ENCODE measurements at regions of chr9 and their contacts with region 1.

Region 1: DNA sequence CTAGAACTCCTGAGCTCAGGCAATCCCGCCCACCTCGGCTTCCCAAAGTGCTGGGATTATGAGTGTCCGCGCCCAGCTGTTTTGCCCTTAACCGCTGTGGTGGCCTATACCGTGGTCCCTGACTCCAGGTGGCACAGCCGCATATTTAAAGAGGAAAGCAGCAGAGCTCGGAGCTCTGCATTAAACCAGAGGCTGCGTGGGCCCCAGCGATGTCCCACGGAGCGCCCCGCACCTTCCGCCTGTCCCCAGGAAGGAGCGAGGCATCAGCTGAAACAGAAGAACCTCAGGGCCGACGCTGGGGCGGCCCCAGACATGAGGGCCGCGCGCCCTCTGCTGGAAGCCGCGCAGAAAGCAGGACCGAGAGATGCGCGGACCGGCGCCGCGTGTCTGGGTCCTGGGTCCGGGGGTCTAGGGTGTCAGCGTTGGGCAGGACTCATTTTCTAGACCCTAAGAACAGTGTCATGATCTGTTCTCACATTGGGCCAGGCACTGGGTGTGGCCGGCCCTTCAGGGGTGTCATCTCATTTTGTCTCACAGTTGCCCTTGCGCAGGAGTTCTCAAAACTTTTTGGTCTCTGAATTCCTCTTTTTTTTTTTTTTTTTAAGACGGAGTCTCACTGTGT is 37.7 kb downstream of the LAMC3 start:
- H3K4me3 ChIP-seq: no peak overlapping the region
- H3K27ac ChIP-seq: no peak overlapping the region
- H3K4me1 ChIP-seq: no peaks in the 10 kb centered on the region
- CTCF ChIP-seq: peak; percentile 90

Region 2: GRCh38 chr9:130707225-130707976 is 339.3 kb before region 1 on chr9:
- CTCF ChIA-PET with region 1: interaction called, 14 read pairs
- POLR2A ChIA-PET with region 1: interaction called, 3 read pairs
- H3K4me3 ChIP-seq: no peak overlapping the region
- H3K27ac ChIP-seq: no peak overlapping the region
- H3K4me1 ChIP-seq: no peaks in the 10 kb centered on the region
- CTCF ChIP-seq: peak; percentile 79

Region 3: GRCh38 chr9:130899051-130899748 is 147.5 kb before region 1 on chr9:
- CTCF ChIA-PET with region 1: interaction called, 11 read pairs
- POLR2A ChIA-PET with region 1: no interaction called
- H3K4me3 ChIP-seq: no peak overlapping the region
- H3K27ac ChIP-seq: no peak overlapping the region
- H3K4me1 ChIP-seq: no peaks in the 10 kb centered on the region
- CTCF ChIP-seq: no peak

Region 4: DNA sequence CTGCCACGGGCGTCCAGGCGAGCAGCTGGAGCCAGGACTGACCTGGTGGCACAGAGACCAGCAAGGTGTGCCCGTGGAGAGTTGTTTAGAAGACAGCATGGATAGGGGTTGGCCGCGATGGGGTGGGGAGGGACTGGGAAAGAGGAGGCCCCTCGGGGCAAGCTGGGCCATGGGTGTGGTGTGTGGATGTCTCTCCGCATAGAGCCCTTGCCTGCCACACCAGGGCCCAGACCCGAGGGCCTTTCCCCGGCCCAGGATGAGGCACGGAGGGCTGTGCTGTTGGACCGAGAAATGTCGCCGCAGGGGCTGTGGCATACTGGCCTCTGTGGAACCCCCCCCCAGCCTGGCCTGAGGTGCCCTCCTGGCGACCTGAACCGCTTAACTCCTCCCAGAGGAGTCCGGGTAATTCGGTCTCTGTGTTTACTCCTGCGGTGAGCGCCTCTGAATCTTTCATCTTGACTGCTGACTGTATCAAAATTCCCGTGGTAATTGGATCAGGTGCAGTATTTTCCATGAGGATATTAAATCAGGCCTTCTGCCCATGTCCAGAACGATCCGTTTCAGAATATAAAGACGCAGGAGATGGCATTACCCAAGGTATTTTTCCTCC is 60.2 kb before region 1 on chr9:
- CTCF ChIA-PET with region 1: interaction called, 11 read pairs
- POLR2A ChIA-PET with region 1: no interaction called
- H3K4me3 ChIP-seq: no peak overlapping the region
- H3K27ac ChIP-seq: no peak overlapping the region
- H3K4me1 ChIP-seq: no peaks in the 10 kb centered on the region
- CTCF ChIP-seq: no peak

Region 5: DNA sequence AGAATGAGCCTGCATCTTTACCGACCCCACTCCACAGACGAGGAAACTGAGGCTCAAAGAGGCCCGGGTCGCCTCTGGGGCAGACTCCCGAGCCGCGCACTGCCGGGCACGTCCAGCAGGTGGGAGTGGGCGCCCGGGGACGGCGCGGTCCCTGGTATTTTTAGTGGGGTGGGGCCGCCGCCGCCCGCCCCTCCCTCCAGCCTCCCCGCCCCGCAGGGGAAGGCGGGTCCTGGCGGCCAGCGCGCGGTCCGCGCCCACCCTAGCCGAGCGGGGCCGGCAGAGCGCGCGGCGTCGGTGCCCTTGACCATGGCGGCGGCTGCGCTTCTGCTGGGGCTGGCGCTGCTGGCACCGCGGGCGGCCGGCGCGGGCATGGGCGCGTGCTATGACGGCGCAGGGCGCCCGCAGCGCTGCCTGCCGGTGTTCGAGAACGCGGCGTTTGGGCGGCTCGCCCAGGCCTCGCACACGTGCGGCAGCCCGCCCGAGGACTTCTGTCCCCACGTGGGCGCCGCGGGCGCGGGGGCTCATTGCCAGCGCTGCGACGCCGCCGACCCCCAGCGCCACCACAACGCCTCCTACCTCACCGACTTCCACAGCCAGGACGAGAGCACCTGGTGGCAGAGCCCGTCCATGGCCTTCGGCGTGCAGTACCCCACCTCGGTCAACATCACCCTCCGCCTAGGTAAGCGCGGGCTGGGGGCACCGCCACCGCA is 37.6 kb before region 1 on chr9 and contains the start of gene LAMC3:
- CTCF ChIA-PET with region 1: interaction called, 34 read pairs
- POLR2A ChIA-PET with region 1: no interaction called
- H3K4me3 ChIP-seq: peak within 1 kb of the TSS; percentile 31
- H3K27ac ChIP-seq: no peak within 1 kb of the TSS
- H3K4me1 ChIP-seq: no peaks in the 10 kb centered on the region
- CTCF ChIP-seq: peak; percentile 43; the same call in 1 of the 2 replicates

Region 6: GRCh38 chr9:131024978-131025868 is 21.5 kb before region 1 on chr9:
- CTCF ChIA-PET with region 1: interaction called, 13 read pairs
- POLR2A ChIA-PET with region 1: no interaction called
- H3K4me3 ChIP-seq: no peak overlapping the region
- H3K27ac ChIP-seq: no peak overlapping the region
- H3K4me1 ChIP-seq: no peaks in the 10 kb centered on the region
- CTCF ChIP-seq: no peak

Region 7: GRCh38 chr9:131379056-131379455 is 332.4 kb after region 1 on chr9:
- CTCF ChIA-PET with region 1: no interaction called
- POLR2A ChIA-PET with region 1: no interaction called
- H3K4me3 ChIP-seq: no peak overlapping the region
- H3K27ac ChIP-seq: no peak overlapping the region
- H3K4me1 ChIP-seq: peaks cover 8% of the 10 kb centered on the region; the same call in 1 of the 2 replicates
- CTCF ChIP-seq: no peak